ENCODE measurements at regions of chr4 and their contacts with region 1.

Region 1: GRCh38 chr4:89009761-89010369 is 47.1 kb downstream of the FAM13A start:
- DNase-seq: no peak
- H3K4me3 ChIP-seq: no peak overlapping the region
- H3K27ac ChIP-seq: no peak overlapping the region
- H3K4me1 ChIP-seq: no peaks in the 10 kb centered on the region
- H3K27me3 ChIP-seq: no peaks in the 10 kb centered on the region
- CTCF ChIP-seq: no peak
- POLR2A ChIP-seq: no peak

Region 2: GRCh38 chr4:88659055-88659889 is 350.6 kb before region 1 on chr4:
- intact Hi-C with region 1: loop called (anchors 10 kb)
- DNase-seq: no peak
- H3K4me3 ChIP-seq: no peak overlapping the region
- H3K27ac ChIP-seq: peak overlapping the region in 2 of 8 donors; percentile 16 to 22
- H3K4me1 ChIP-seq: no peaks in the 10 kb centered on the region
- H3K27me3 ChIP-seq: no peaks in the 10 kb centered on the region
- CTCF ChIP-seq: peak in 10 of 11 experiments; percentile 33 to 77 (median 62)
- POLR2A ChIP-seq: no peak